Naive thymus-derived CD8-positive, alpha-beta T cell (primary cell): ENCODE measurements at regions of chr11 and their contacts with region 1.

Region 1: GRCh38 chr11:14519917-14520746 is at the start of gene PSMA1:
- DNase-seq: peak; percentile 83 to 92 (median 88)
- ATAC-seq: peak; percentile 90 to 96
- H3K4me3 Mint-ChIP-seq: peak within 1 kb of the TSS; percentile 90 to 99 (median 96)
- H3K27ac Mint-ChIP-seq: peak within 1 kb of the TSS; percentile 92 to 98 (median 98)
- H3K4me1 Mint-ChIP-seq: peaks cover 11 to 38% (median 27%) of the 10 kb centered on the region in 4 donors
- H3K27me3 Mint-ChIP-seq: no peaks in the 10 kb centered on the region
- polyA plus RNA-seq, gene PSMA1: 154 to 159 (median 156) TPM

Region 2: DNA sequence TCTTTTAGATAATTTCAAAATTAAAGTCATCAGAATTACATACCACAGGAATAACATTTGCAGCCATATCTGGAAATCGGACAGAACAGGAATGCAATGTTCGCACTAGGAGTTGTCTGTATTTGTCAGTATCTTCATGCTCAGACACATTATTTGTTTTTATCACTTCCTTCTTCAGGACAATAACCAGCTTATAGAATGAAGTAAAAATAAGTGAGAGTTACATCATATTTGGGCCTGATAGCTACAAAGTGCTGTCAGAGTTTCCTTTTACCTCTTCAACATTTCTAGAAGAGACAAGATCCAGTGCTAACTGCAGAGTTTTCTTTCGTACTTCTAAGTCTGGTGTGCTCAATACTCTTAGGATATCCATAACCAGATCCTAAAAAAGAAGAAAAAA is 39.4 kb before region 1 on chr11:
- POLR2A ChIA-PET with region 1: no interaction called
- DNase-seq: no peak
- ATAC-seq: no peak
- H3K4me3 Mint-ChIP-seq: no peak overlapping the region
- H3K27ac Mint-ChIP-seq: peak overlapping the region in 4 of 10 donors; percentile 2 to 67 (median 40)
- H3K4me1 Mint-ChIP-seq: peaks cover 6 to 23% (median 9%) of the 10 kb centered on the region in 4 donors
- H3K27me3 Mint-ChIP-seq: no peaks in the 10 kb centered on the region

Region 3: GRCh38 chr11:14499554-14500180 is 20.5 kb before region 1 on chr11 and contains the start of gene COPB1:
- POLR2A ChIA-PET with region 1: interaction called, 20 read pairs
- DNase-seq: peak; percentile 82 to 96 (median 93)
- ATAC-seq: peak; percentile 93 to 94
- H3K4me3 Mint-ChIP-seq: peak within 1 kb of the TSS; percentile 90 to 100 (median 96)
- H3K27ac Mint-ChIP-seq: peak within 1 kb of the TSS; percentile 90 to 100 (median 98)
- H3K4me1 Mint-ChIP-seq: peaks cover 23 to 50% (median 44%) of the 10 kb centered on the region in 4 donors
- H3K27me3 Mint-ChIP-seq: no peaks in the 10 kb centered on the region
- polyA plus RNA-seq, gene COPB1: 46.6 to 67.7 (median 64.9) TPM